Heart left ventricle (tissue), 16 donors: ENCODE measurements at regions of chr7 and their contacts with region 1.

Region 1: GRCh38 chr7:11212080-11212711 is 238.5 kb downstream of the PHF14 start:
- DNase-seq: peak in 3 of 5 donors; percentile 30 to 35 (median 33)
- ATAC-seq: peak in 3 of 4 donors; percentile 64 to 77 (median 66)
- H3K4me3 ChIP-seq: no peak overlapping the region
- H3K27ac ChIP-seq: no peak overlapping the region
- H3K4me1 ChIP-seq: peaks cover 0 to 7% (median 0%) of the 10 kb centered on the region in 12 donors
- H3K27me3 ChIP-seq: no peaks in the 10 kb centered on the region
- CTCF ChIP-seq: peak; percentile 69 to 91 (median 82)
- POLR2A ChIP-seq: no peak

Region 2: GRCh38 chr7:11060893-11061292 is 151.3 kb before region 1 on chr7:
- intact Hi-C with region 1: loop called in 1 of 10 experiments (anchors 10 kb)
- DNase-seq: no peak
- ATAC-seq: no peak
- H3K4me3 ChIP-seq: no peak overlapping the region
- H3K27ac ChIP-seq: no peak overlapping the region
- H3K4me1 ChIP-seq: peaks cover 0 to 10% (median 0%) of the 10 kb centered on the region in 12 donors
- H3K27me3 ChIP-seq: no peaks in the 10 kb centered on the region
- CTCF ChIP-seq: no peak
- POLR2A ChIP-seq: no peak